Activated CD8-positive, alpha-beta T cell treated with anti-CD3 and anti-CD28 coated beads, Interleukin-2, amount 10 ng/mL, durations not matched to agents 7 days and 5 days (primary cell): ENCODE measurements at regions of chr2 and their contacts with region 1.

Region 1: GRCh38 chr2:207529330-207530159 is at the start of gene CREB1:
- DNase-seq: peak; percentile 99
- ATAC-seq: peak; percentile 90
- H3K4me3 Mint-ChIP-seq: peak within 1 kb of the TSS; percentile 90
- H3K27ac Mint-ChIP-seq: peak within 1 kb of the TSS; percentile 99
- H3K4me1 Mint-ChIP-seq: peaks cover 48% of the 10 kb centered on the region
- H3K27me3 Mint-ChIP-seq: peaks cover 15% of the 10 kb centered on the region
- total RNA-seq, gene CREB1: 87.6 to 103 TPM

Region 2: DNA sequence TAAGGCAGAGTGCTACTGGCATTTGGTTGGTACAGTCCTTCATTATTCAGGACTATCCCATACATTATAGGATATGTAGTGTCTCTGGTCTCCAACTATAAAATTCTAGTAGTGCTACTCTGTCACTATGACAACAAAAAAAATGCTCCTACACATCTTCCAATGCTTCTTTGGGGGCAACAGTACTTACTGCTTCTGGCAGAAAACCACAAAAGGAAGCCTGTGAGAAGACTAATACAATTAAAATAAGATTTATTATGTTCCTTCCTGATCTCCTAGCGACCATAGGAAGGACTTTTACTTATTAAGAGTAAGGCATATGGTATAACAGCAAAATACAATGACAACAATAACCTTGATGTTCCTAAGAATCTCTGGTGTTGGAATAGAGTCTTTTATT is 638.6 kb before region 1 on chr2:
- CTCF ChIA-PET with region 1: no interaction called
- POLR2A ChIA-PET with region 1: no interaction called
- DNase-seq: no peak
- ATAC-seq: no peak
- H3K4me3 Mint-ChIP-seq: no peak overlapping the region
- H3K27ac Mint-ChIP-seq: no peak overlapping the region
- H3K4me1 Mint-ChIP-seq: no peaks in the 10 kb centered on the region
- H3K27me3 Mint-ChIP-seq: no peaks in the 10 kb centered on the region

Region 3: DNA sequence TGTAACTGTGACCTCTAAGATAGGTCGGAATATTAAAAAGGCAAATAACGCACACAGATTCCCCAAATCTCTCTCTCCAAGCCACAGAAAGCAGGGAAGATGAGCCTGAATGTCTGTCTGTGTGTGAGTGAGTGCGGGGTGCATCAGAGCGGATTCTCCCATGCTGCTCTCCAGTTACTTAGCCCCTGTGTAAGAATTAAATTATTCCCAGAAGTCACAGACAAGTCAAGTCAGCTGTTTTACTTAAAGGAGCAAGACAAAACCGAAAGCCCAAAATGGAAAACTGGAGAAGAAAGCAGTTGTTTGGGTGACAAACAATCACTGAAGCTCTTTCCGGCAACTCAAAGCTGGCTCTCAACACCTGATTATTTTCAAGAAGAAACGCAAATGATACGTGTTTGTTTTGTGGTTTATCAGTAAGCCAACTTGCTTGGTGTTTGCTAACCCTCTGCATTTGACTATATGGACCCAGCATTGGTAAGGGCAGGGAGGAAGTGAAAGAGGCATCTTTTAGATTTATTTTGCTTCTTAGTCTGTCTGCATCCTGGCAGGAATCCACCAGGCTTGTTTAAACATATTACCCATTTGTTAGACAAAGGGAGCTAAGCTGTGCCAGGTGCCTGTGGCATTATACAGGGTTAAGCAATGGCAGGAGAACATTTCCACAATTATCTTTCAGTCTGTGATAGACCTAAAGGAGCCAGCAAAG is 121.3 kb before region 1 on chr2:
- CTCF ChIA-PET with region 1: no interaction called
- POLR2A ChIA-PET with region 1: no interaction called
- DNase-seq: no peak
- ATAC-seq: no peak
- H3K4me3 Mint-ChIP-seq: no peak overlapping the region
- H3K27ac Mint-ChIP-seq: no peak overlapping the region
- H3K4me1 Mint-ChIP-seq: no peaks in the 10 kb centered on the region
- H3K27me3 Mint-ChIP-seq: peaks cover 5% of the 10 kb centered on the region

Region 4: DNA sequence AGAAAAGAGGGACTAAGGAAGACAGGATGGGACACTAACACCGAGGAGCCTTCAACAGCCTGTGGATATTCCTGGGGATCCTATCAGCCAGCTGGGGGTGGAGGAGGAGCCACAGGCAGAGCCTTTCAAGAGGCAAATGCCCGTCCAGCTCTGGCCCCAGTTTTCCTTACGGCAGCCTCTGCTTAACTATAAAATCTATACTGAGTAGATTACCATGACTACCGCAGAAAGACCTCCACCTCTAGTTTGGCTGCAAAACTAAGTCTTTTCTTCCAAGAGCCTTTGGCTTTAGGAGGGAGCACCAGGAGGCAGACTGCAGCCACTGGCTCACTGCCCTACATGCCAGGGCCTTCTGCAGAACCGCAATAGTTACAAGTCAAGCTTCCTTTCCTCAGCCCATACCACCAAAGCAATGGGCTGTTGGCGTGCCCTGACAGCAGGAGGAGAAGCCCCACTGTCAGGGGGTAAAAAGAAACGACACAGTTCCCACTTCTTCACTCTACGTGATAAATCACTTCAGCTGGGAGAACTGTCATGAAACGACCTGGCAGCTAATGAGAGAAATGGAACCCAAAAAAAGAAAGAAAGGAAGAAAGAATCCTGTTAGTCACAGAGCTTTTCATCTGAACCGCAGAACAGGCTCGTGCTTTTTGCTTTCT is 24.9 kb before region 1 on chr2:
- CTCF ChIA-PET with region 1: interaction called, 3 read pairs
- POLR2A ChIA-PET with region 1: interaction called, 28 read pairs
- DNase-seq: no peak
- ATAC-seq: no peak
- H3K4me3 Mint-ChIP-seq: peak overlapping the region; percentile 35
- H3K27ac Mint-ChIP-seq: no peak overlapping the region
- H3K4me1 Mint-ChIP-seq: peaks cover 72% of the 10 kb centered on the region
- H3K27me3 Mint-ChIP-seq: no peaks in the 10 kb centered on the region

Region 5: DNA sequence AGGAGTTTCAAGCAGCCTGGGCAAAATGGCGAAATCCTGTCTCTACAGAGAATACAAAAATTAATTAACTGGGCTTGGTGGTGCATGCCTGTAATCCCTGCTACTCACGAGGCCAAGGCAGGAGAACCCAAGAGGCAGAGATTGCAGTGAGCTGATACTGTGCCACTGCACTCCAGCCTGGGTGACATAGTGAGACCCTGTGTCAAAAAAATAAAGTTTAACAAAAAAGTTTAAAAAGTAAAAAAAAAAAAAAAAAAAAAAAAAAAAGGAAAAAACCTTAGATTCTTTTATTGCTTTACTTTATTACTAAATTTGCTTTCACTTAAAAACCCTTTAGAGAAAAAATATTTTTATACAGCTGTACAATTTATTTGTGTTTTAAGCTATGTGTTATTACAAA is 10.9 kb after region 1 on chr2:
- CTCF ChIA-PET with region 1: interaction called, 10 read pairs
- POLR2A ChIA-PET with region 1: interaction called, 19 read pairs
- DNase-seq: no peak
- ATAC-seq: no peak
- H3K4me3 Mint-ChIP-seq: no peak overlapping the region
- H3K27ac Mint-ChIP-seq: no peak overlapping the region
- H3K4me1 Mint-ChIP-seq: peaks cover 27% of the 10 kb centered on the region
- H3K27me3 Mint-ChIP-seq: no peaks in the 10 kb centered on the region

Region 6: DNA sequence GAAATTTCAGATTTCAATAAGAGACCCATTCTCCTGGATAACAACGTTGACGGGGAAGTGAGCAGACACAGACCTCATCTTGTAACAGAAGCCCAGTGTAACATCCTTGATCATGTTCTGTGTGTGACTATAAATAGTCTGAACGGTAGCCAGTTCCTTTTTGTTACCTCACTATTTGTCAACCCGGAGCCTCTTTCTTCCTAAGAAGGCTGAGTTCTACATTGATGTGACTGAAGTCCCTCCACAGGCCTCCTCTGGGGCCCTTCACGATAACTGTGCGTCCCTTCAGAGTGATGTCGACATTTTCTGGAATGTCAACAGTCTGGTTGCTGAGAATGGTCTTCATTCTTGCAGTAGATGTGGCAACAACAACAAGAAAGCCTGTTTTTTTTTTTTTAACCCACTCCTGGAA is 502.1 kb after region 1 on chr2:
- CTCF ChIA-PET with region 1: no interaction called
- POLR2A ChIA-PET with region 1: no interaction called
- DNase-seq: no peak
- ATAC-seq: no peak
- H3K4me3 Mint-ChIP-seq: no peak overlapping the region
- H3K27ac Mint-ChIP-seq: no peak overlapping the region
- H3K4me1 Mint-ChIP-seq: no peaks in the 10 kb centered on the region
- H3K27me3 Mint-ChIP-seq: peaks cover 6% of the 10 kb centered on the region